IMR-90 (cell line): ENCODE measurements at regions of chr21 and their contacts with region 1.

Region 1: GRCh38 chr21:33558777-33559421 is 16.1 kb downstream of the SON start:
- DNase-seq: peak; percentile 70
- ATAC-seq: peak; percentile 72
- H3K4me3 ChIP-seq: no peak overlapping the region
- H3K27ac ChIP-seq: no peak overlapping the region
- H3K4me1 ChIP-seq: peaks cover 2% of the 10 kb centered on the region; the same call in 1 of the 2 replicates
- H3K27me3 ChIP-seq: no peaks in the 10 kb centered on the region
- CTCF ChIP-seq: no peak
- POLR2A ChIP-seq: no peak
- RAD21 ChIP-seq: no peak

Region 2: DNA sequence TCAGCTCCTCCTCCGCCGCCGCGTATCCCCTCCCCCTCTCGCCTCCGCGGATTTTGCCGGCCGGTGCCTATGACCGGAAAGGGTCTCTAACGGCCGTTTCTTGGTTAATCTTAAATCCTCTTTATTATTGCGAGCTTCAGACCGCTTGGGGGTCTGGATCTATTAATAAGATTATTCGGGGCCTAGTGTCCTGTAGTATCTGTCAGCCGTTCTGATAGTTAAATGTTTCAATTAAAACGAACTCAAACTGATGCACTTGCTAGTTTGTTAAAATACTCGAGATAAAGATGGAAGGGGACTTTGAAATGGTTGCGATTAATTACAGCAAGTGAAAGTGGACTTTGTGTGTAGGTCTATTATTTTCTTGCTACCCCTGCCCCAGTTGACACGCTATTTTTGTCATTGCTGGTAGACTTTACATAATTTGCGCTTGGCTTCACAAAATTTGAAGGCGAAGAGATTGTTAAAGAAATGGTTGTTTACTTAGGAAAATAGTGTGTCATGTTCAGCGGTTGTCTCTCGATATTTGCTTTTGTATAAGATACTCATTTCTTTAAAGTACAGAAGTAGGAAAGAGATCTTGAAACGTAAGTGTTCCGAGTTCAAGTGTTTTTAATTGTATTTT is 15.3 kb before region 1 on chr21:
- CTCF ChIA-PET with region 1: no interaction called
- POLR2A ChIA-PET with region 1: no interaction called
- dilution Hi-C with region 1: no loop called
- in situ Hi-C with region 1: no loop called
- intact Hi-C with region 1: loop called (anchors 2 kb)
- DNase-seq: no peak
- ATAC-seq: peak; percentile 30
- H3K4me3 ChIP-seq: peak overlapping the region; percentile 70
- H3K27ac ChIP-seq: peak overlapping the region; percentile 93
- H3K4me1 ChIP-seq: no peaks in the 10 kb centered on the region
- H3K27me3 ChIP-seq: no peaks in the 10 kb centered on the region
- CTCF ChIP-seq: no peak
- POLR2A ChIP-seq: no peak
- RAD21 ChIP-seq: no peak